ENCODE measurements at regions of chr11 and their contacts with region 1.

Region 1: GRCh38 chr11:119741369-119742262 is 12.6 kb upstream of the NECTIN1 start:
- DNase-seq: peak; percentile 39
- H3K4me3 Mint-ChIP-seq: no peak overlapping the region
- H3K27ac Mint-ChIP-seq: no peak overlapping the region
- H3K4me1 Mint-ChIP-seq: no peaks in the 10 kb centered on the region
- H3K27me3 Mint-ChIP-seq: peaks cover 28% of the 10 kb centered on the region
- CTCF ChIP-seq: peak; percentile 92

Region 2: DNA sequence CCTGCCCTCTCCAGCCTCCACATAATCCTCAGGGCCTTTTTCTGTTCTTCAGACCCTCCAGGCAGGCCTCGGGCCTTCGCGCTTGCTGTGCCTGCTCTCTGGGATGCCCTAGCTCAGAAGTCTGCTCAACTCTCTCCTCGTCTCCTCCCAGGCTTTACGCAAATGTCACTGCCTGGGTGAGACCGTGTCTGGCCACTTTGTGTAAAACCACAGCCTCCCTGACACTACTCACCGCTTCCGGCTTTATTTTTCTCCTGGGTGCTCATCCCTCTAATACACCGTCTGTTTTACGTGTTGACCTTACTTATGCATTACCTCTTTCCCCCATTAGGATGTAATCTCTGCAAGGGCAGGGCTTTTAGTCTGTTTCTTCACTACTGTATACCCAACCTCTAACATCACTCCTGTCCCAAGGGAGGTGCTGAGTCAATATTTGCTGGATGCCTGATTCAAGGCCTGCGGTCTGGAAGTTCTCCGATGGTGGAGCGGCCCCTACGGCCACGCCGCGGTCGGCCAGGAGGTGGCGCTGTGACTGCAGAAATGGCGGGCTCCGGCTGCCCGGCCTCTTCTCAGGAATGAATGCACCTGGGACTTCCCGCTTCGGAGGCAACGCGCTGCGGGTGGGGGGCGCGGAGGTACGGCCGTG is 260.5 kb before region 1 on chr11:
- CTCF ChIA-PET with region 1: no interaction called
- POLR2A ChIA-PET with region 1: no interaction called
- intact Hi-C with region 1: loop called (anchors 5 kb)
- DNase-seq: peak; percentile 80
- H3K4me3 Mint-ChIP-seq: no peak overlapping the region
- H3K27ac Mint-ChIP-seq: peak overlapping the region; percentile 27
- H3K4me1 Mint-ChIP-seq: peaks cover 7% of the 10 kb centered on the region
- H3K27me3 Mint-ChIP-seq: peaks cover 14% of the 10 kb centered on the region
- CTCF ChIP-seq: peak; percentile 98

Measured in MCF 10A (cell line).